Ascending aorta (tissue), 2 donors: ENCODE measurements at regions of chr3 and their contacts with region 1.

Region 1: DNA sequence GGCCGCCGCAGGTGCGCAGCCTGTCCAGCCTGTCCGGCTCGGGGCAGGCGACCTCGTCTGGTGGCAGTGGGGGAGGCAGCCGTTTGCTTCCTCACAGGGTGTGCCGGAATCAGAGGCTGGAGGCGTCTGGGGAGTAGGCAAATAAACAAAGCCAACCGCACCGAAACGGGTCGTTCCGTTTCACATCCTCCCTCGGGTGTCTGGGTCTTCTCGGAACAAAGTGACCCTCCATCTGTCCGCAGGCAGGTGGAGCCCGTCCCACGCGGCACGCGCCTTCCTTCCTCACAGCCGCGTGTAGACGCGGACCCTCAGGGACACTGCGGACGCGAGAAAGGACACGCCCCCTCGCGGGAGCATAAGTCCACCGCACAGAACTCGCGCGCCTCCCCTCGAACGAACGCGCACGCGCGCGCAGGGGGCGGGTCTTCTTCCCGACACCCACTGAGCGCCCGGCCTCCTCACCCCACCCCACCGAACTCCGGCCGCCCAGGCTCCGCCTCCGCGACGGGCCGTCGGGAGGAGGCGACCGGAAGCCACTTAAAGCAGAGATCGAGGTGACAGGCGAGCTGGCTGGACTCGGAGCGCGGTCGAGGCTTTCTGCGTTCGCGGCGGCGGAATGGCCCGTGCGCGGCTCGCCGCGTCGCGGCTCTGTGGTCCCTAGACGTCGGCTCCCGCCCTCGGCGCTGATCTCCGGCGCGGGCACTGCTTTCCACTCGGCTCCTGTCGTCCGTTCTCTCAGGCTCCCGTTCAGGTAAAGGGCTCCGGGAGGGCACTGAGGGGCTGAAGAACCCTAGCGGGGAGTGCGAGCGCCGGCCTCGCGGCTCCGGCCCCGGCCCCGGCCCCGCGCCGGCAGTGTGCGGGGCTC is at the start of gene TIPARP:
- DNase-seq: peak; percentile 97 to 100
- H3K4me3 ChIP-seq: peak within 1 kb of the TSS; percentile 70 to 92
- H3K27ac ChIP-seq: peak within 1 kb of the TSS; percentile 93 to 96
- H3K4me1 ChIP-seq: peaks cover 0 to 11% of the 10 kb centered on the region in 2 donors
- H3K27me3 ChIP-seq: no peaks in the 10 kb centered on the region
- CTCF ChIP-seq: peak; percentile 71 to 85 (median 73)
- total RNA-seq, gene TIPARP: 7.2 TPM

Region 2: DNA sequence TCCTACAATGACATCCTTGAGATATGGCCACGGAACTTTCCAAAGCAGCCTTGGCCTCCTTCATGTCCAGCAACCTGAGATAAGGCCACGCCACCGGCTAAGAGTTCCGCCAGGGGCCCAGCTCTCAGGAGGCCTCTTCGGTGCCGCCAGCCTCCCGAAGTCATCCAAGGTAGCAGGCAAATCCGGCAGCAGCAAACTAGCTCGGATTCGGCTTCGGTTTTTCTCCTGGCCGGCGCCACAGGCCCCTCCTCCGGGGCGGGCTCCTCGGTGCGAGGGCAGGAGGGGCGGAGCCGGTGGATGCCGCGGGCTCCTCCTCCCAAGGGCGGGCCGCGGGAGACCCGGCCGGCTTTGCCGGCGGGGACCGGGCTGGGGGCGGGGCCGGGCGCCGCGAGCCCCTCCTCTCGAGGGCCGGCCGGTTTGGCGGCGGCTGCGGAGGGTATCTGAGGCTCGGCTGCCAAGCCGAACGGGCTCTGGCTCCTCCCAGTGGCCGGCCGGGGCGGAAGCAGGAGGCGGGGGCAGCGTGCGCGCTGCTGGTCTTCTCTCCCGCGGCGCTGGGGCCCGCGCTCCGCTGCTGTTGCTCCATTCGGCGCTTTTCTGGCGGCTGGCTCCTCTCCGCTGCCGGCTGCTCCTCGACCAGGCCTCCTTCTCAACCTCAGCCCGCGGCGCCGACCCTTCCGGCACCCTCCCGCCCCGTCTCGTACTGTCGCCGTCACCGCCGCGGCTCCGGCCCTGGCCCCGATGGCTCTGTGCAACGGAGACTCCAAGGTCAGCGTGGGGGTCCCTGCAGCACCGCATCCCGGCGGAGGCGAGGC is 803.9 kb before region 1 on chr3 and contains the start of gene GMPS:
- intact Hi-C with region 1: loop called (anchors 5 kb)
- DNase-seq: peak; percentile 87 to 97
- H3K4me3 ChIP-seq: peak within 1 kb of the TSS; percentile 77 to 90
- H3K27ac ChIP-seq: peak within 1 kb of the TSS; percentile 96 to 98
- H3K4me1 ChIP-seq: peaks cover 0 to 25% of the 10 kb centered on the region in 2 donors
- H3K27me3 ChIP-seq: no peaks in the 10 kb centered on the region
- CTCF ChIP-seq: peak; percentile 35 to 62 (median 60)
- total RNA-seq, gene GMPS: 17.8 TPM

Region 3: GRCh38 chr3:156253150-156253549 is 421.1 kb before region 1 on chr3:
- intact Hi-C with region 1: no loop called
- DNase-seq: no peak
- H3K4me3 ChIP-seq: no peak overlapping the region
- H3K27ac ChIP-seq: no peak overlapping the region
- H3K4me1 ChIP-seq: no peaks in the 10 kb centered on the region
- H3K27me3 ChIP-seq: no peaks in the 10 kb centered on the region
- CTCF ChIP-seq: no peak

Region 4: GRCh38 chr3:156535162-156535627 is 139.1 kb before region 1 on chr3:
- intact Hi-C with region 1: loop called (anchors 1 kb)
- DNase-seq: peak; percentile 48 to 90
- H3K4me3 ChIP-seq: no peak overlapping the region
- H3K27ac ChIP-seq: peak overlapping the region; percentile 62 to 78
- H3K4me1 ChIP-seq: peaks cover 0 to 5% of the 10 kb centered on the region in 2 donors
- H3K27me3 ChIP-seq: no peaks in the 10 kb centered on the region
- CTCF ChIP-seq: peak; percentile 26 to 41 (median 37)

Region 5: GRCh38 chr3:156605686-156606605 is 68.3 kb before region 1 on chr3:
- intact Hi-C with region 1: loop called (anchors 2 kb)
- DNase-seq: no peak
- H3K4me3 ChIP-seq: peak overlapping the region; percentile 51 to 63
- H3K27ac ChIP-seq: peak overlapping the region; percentile 59 to 77
- H3K4me1 ChIP-seq: peaks cover 0 to 4% of the 10 kb centered on the region in 2 donors
- H3K27me3 ChIP-seq: no peaks in the 10 kb centered on the region
- CTCF ChIP-seq: no peak

Region 6: DNA sequence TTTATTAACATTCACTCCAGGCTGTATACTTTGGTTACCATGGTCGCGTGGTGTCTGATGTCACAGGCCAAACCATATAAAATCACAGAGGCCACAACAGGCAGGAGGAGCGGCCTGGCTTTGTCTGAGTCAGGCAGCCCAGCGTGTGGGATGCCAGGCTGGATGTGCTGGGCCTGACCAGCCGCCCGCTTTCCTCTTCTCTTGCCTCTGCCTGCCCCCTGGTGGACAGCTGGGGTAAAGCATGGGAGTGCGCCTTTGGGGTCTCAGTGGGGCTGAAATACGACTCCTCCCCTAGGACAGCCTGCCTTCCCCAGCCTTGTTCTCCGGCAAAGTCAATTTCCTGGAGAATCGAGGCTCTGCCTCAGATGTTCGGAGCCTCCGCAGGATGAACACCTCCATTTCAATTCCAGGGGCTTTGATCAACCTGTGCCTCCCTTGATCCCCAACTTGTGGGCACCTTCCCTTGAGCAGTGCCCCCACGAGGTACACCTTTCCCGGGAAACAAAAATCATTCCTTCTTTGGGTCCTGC is 407.5 kb after region 1 on chr3:
- intact Hi-C with region 1: loop called (anchors 1 kb)
- DNase-seq: peak; percentile 80 to 96
- H3K4me3 ChIP-seq: no peak overlapping the region
- H3K27ac ChIP-seq: peak overlapping the region; percentile 5 to 25
- H3K4me1 ChIP-seq: peaks cover 7 to 10% of the 10 kb centered on the region in 2 donors
- H3K27me3 ChIP-seq: no peaks in the 10 kb centered on the region
- CTCF ChIP-seq: peak; percentile 94 to 97 (median 96)

Region 7: DNA sequence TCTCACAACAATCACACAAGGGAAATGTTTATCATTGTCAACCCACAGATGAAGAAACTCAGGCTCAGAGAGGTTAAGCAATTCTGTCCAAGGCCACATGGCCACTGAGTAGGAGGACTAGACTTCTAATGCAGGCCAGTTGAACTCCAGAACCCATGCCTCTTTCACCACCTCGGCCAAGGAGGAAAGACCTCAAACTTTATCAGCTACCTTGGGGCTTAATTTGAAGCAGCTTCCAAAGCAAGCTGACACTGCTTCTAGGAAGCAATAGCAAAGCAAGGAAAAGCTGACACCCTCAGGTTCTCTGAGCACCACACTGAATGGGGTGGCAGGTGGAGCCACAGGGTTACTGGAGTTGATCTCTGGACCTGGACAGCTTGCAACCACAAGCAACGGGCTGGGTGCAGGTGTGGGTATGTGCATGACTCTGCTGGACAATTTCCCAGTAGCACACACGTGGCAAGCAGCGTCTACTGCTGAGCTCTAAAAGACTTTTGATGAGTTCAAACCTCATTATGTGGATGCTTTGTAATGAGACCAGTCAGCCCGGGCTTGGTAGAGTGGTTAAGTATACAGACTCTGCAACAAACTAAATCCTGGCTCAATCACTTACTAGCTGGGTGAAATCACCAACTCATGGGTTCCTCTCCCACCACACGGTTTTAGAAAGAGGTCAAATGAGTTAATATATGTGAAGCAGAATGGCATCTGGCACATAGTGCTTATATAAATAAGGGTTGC is 462.5 kb after region 1 on chr3:
- intact Hi-C with region 1: loop called (anchors 2 kb)
- DNase-seq: no peak
- H3K4me3 ChIP-seq: no peak overlapping the region
- H3K27ac ChIP-seq: peak overlapping the region; percentile 23 to 62
- H3K4me1 ChIP-seq: peaks cover 14 to 20% of the 10 kb centered on the region in 2 donors
- H3K27me3 ChIP-seq: no peaks in the 10 kb centered on the region
- CTCF ChIP-seq: no peak

Region 8: DNA sequence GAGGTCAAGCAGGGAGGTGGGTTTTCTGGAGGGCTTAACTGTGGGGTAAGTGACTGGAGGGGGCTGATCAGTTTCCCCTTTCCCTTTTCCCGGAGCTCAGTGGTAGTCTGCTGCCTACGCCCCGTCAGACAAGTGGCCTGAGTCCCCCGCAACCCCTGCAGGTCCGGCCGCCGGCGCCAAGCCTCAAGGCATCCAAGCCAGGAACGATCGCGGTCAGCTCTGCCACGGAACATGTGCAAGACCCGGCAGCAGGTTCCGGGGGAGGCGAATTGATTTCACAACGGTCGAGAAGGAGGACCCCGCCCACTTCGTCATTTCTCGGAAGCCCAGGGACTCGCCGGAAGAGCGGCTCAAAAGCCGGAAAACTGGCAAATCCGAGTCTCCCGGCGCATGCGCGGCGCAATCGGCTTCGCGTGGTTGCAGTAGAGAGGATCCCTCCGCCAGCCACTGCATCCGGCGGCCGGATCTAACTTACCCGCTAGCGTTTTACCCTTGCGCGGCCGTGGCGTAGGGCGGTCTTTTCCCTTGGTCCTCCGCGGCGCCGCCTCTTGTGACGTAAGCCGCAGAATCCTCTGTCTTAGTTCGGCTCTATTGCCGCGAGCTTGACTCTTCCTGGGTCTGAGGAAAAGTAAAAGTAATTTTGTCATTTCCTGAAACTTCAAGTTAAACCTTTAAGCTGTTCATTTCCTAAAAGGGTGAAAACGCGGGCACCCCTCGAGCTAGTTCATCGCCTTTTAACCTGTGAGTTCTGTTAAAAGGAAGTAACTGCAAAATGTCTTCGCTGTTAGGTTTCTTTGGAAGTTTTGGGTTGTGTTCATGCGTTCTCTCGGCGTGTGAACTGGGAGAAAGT is 500.6 kb after region 1 on chr3:
- intact Hi-C with region 1: loop called (anchors 1 kb)
- DNase-seq: peak; percentile 94 to 99
- H3K4me3 ChIP-seq: peak overlapping the region; percentile 75 to 76
- H3K27ac ChIP-seq: peak overlapping the region; percentile 96 to 98
- H3K4me1 ChIP-seq: peaks cover 0 to 17% of the 10 kb centered on the region in 2 donors
- H3K27me3 ChIP-seq: no peaks in the 10 kb centered on the region
- CTCF ChIP-seq: no peak